ENCODE measurements at regions of chr17 and their contacts with region 1.

Region 1: DNA sequence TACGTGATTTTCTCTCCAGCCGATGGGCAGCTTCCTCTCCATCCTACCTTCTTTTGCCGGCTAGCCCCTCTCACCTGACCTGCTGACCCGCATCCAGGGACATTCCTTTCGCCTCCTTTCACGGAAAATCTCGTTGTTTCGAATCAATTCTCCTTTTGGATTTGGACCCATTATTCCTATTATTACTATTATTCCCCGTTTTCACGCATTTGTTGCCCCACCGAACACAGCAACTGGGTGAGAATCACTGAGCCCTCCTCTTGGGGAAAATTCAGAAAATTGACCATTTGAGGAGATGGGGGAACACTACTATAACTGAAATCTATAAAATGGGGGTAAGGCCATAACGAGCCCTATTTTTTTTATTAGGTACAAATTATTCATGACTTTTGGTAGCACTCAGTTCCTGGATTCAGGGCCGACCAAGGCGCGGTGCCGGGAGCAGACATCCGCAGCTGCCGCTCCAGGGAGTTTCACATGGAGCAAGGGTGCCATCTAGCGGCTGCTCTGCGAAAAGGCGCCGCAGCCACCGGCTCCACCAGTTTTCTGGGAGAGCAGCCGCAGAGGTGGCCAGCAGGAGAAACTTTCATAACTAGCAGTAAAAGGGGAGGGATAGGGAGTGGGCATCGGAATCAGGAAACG is 3.3 kb upstream of the HOXB8 start:
- DNase-seq: peak; percentile 92
- ATAC-seq: peak; percentile 29
- H3K4me3 Mint-ChIP-seq: 0 out of 2 replicates have a peak overlapping the region, but pooled peaks have one; percentile 25
- H3K27ac Mint-ChIP-seq: no peak overlapping the region
- H3K4me1 Mint-ChIP-seq: peaks cover 25% of the 10 kb centered on the region
- H3K27me3 Mint-ChIP-seq: peaks cover 100% of the 10 kb centered on the region; the same call in 1 of the 2 replicates
- CTCF ChIP-seq: peak; percentile 92

Region 2: GRCh38 chr17:48593840-48594537 is 24.4 kb before region 1 on chr17:
- CTCF ChIA-PET with region 1: interaction called, 10 read pairs
- POLR2A ChIA-PET with region 1: no interaction called
- DNase-seq: peak; percentile 90
- ATAC-seq: peak; percentile 20
- H3K4me3 Mint-ChIP-seq: peak overlapping the region; percentile 50
- H3K27ac Mint-ChIP-seq: no peak overlapping the region
- H3K4me1 Mint-ChIP-seq: peaks cover 55% of the 10 kb centered on the region
- H3K27me3 Mint-ChIP-seq: peaks cover 100% of the 10 kb centered on the region; the same call in 1 of the 2 replicates
- CTCF ChIP-seq: peak; percentile 90

Region 3: GRCh38 chr17:48738803-48739526 is 120.6 kb after region 1 on chr17:
- CTCF ChIA-PET with region 1: no interaction called
- POLR2A ChIA-PET with region 1: no interaction called
- DNase-seq: no peak
- ATAC-seq: peak; percentile 68
- H3K4me3 Mint-ChIP-seq: peak overlapping the region; percentile 56
- H3K27ac Mint-ChIP-seq: no peak overlapping the region
- H3K4me1 Mint-ChIP-seq: peaks cover 15% of the 10 kb centered on the region
- H3K27me3 Mint-ChIP-seq: peaks cover 100% of the 10 kb centered on the region
- CTCF ChIP-seq: no peak